Activated CD4-positive, alpha-beta T cell treated with anti-CD3 and anti-CD28 coated beads, Interleukin-2, amount 10 ng/mL, durations not matched to agents 7 days and 5 days (primary cell): ENCODE measurements at regions of chr7 and their contacts with region 1.

Region 1: GRCh38 chr7:143380255-143380645 is 895 bp upstream of the ZYX start:
- DNase-seq: peak; percentile 88
- H3K4me3 Mint-ChIP-seq: peak overlapping the region; percentile 84
- H3K27ac Mint-ChIP-seq: peak overlapping the region; percentile 93
- H3K4me1 Mint-ChIP-seq: peaks cover 43% of the 10 kb centered on the region
- H3K27me3 Mint-ChIP-seq: no peaks in the 10 kb centered on the region

Region 2: GRCh38 chr7:143126140-143126539 is 254.1 kb before region 1 on chr7:
- CTCF ChIA-PET with region 1: no interaction called
- POLR2A ChIA-PET with region 1: no interaction called
- DNase-seq: no peak
- H3K4me3 Mint-ChIP-seq: no peak overlapping the region
- H3K27ac Mint-ChIP-seq: no peak overlapping the region
- H3K4me1 Mint-ChIP-seq: no peaks in the 10 kb centered on the region
- H3K27me3 Mint-ChIP-seq: peaks cover 20% of the 10 kb centered on the region

Region 3: DNA sequence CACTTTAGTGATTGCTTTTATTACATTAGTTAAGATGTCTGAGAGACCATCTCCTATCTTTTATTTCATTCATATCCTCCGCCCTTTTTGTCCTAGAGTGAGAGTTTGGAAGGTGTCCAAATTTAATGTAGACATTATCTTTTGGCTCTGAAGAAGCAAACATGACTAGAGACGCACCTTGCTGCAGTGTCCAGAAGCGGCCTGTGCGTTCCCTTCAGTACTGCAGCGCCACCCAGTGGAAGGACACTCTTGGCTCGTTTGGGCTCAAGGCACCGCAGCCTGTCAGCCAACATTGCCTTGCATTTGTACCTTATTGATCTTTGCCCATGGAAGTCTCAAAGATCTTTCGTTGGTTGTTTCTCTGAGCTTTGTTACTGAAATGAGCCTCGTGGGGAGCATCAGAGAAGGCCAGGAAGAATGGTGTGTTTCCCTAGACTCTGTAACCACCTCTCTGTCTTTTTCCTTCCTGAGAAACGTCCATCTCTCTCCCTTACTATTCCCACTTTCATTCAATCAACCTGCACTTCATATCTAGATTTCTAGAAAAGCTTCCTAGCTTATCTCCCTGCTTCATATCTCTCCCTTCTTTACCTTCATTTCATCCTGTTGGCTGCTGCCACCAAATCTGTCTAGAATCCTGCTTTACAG is 74.7 kb before region 1 on chr7:
- CTCF ChIA-PET with region 1: interaction called, 13 read pairs
- POLR2A ChIA-PET with region 1: no interaction called
- DNase-seq: peak; percentile 71
- H3K4me3 Mint-ChIP-seq: no peak overlapping the region
- H3K27ac Mint-ChIP-seq: peak overlapping the region; percentile 21
- H3K4me1 Mint-ChIP-seq: peaks cover 70% of the 10 kb centered on the region
- H3K27me3 Mint-ChIP-seq: no peaks in the 10 kb centered on the region

Region 4: DNA sequence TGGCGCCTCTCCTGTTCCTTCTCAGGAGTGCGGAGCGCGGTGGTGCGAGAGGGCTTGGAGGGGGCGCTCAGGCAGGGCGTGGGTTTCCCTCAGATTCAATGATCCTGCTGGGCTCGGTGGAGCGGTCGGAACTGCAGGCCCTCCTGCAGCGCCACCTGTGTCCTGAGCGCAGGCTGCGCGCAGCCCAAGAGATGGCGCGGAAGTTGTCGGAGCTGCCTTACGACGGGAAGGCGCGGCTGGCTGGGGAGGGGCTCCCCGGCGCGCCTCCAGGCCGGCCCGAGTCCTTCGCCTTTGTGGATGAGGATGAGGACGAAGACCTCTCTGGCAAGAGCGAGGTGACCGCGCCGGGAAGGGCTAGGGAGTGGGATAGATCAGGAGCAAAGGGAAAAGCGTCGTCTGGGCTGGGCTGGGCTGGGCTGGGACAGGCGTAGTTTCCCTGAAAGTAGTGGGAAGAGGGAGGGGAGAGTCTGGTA is 34.8 kb before region 1 on chr7:
- CTCF ChIA-PET with region 1: interaction called, 12 read pairs
- POLR2A ChIA-PET with region 1: no interaction called
- DNase-seq: peak; percentile 67
- H3K4me3 Mint-ChIP-seq: peak overlapping the region; percentile 57
- H3K27ac Mint-ChIP-seq: peak overlapping the region; percentile 64
- H3K4me1 Mint-ChIP-seq: peaks cover 9% of the 10 kb centered on the region
- H3K27me3 Mint-ChIP-seq: peaks cover 32% of the 10 kb centered on the region

Region 5: GRCh38 chr7:143391462-143392404 is 11.5 kb after region 1 on chr7:
- CTCF ChIA-PET with region 1: interaction called, 18 read pairs
- POLR2A ChIA-PET with region 1: no interaction called
- DNase-seq: no peak
- H3K4me3 Mint-ChIP-seq: no peak overlapping the region
- H3K27ac Mint-ChIP-seq: no peak overlapping the region
- H3K4me1 Mint-ChIP-seq: peaks cover 31% of the 10 kb centered on the region
- H3K27me3 Mint-ChIP-seq: no peaks in the 10 kb centered on the region

Region 6: DNA sequence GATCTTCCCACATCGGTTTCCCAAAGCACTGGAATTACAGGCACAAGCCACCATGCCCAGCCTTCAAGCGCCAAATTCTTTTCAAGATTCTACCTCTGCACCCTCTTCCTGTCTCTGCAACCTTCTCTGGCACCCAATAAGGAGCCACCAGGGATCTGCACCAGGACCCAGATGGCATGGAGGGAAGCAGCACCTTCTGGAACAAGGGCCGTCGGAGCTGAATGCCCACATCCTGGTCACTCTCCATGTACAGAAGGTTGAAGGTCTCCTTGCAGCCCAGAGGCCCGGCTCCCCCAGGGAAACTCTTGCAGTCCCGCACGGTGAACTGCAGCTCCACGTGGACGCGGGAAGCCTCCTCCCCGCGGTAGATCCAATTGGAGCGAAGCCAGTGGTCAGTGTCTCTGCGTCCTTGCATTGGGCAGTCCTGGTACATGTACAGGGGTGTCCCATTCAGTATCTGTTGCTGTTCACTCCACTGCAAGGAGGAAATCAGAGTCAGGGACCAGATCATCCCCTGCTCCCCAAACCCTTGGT is 20.9 kb after region 1 on chr7:
- CTCF ChIA-PET with region 1: interaction called, 18 read pairs
- POLR2A ChIA-PET with region 1: no interaction called
- DNase-seq: no peak
- H3K4me3 Mint-ChIP-seq: no peak overlapping the region
- H3K27ac Mint-ChIP-seq: no peak overlapping the region
- H3K4me1 Mint-ChIP-seq: peaks cover 9% of the 10 kb centered on the region
- H3K27me3 Mint-ChIP-seq: no peaks in the 10 kb centered on the region